ENCODE measurements at regions of chr2 and their contacts with region 1.

Region 1: GRCh38 chr2:88334418-88334817 is 118.1 kb downstream of the FOXI3 start:
- H3K4me3 ChIP-seq: no peak overlapping the region
- H3K27ac ChIP-seq: no peak overlapping the region
- H3K4me1 ChIP-seq: peaks cover 13% of the 10 kb centered on the region
- CTCF ChIP-seq: no peak

Region 2: DNA sequence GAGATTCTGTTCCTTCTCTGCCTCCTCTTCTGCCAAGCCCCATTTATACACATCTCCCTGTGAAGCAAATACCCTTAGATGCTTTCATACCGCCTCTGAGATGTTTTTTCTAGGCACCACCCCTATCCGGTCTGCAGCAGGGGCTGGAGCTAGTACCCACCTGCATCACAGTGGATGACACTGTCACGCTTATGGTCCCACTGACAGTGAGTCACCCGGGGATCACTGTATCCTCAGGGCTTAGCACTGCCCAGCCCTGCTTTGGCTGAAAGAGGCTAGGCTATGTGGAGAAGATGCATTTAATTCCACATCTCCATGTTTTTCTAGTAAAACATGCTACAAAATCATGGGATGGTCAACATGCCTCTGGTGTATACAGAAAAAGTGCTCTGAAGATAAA is 216.4 kb before region 1 on chr2:
- CTCF ChIA-PET with region 1: no interaction called
- POLR2A ChIA-PET with region 1: no interaction called
- H3K4me3 ChIP-seq: no peak overlapping the region
- H3K27ac ChIP-seq: no peak overlapping the region
- H3K4me1 ChIP-seq: no peaks in the 10 kb centered on the region
- CTCF ChIP-seq: no peak

Region 3: DNA sequence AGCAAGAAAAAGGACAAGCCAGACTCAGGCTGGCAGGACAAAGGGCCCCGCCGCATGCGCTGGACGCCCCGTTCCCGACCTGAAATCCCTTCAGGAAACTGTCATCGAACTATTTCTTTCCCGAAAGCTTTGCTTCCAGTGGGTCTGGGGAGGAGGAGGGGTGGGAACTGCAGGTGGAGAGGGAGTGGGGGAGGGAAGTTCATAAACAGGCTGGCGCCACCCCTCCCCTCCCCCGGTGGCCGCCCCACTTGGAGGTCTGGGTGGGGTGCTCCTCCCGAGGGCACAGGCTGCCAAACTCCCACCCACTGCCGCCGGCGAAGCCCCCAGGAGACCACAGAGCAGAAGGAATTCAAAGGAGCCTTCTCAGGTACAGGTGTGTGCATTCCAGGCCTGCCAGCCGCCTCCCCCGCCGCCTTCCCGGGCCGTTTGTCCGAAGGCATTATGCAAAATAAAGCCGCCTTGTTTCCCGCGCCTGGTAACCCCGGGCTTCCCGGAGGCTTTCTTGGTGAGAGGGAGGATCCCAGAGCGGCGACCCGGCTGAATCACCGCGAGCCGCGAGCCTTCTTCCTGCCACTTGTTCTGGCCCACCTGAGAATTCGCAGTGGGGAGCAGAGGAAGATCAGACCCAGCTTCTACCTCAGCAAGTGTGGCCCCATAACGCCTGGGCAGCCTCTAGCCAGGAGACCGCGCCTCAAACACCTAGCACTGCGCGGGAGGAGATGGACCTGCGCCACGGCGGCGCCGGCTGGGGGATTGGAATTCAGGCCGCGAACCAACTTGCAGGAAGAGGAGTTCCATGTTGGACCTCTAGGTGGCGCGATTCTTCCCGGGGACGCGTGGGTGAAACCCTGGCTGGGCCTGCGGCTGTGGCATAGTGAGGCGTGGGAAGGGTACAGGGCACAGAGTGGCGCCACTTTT is 16.2 kb after region 1 on chr2:
- CTCF ChIA-PET with region 1: interaction called, 15 read pairs
- POLR2A ChIA-PET with region 1: no interaction called
- H3K4me3 ChIP-seq: peak overlapping the region; percentile 32
- H3K27ac ChIP-seq: no peak overlapping the region
- H3K4me1 ChIP-seq: no peaks in the 10 kb centered on the region
- CTCF ChIP-seq: peak; percentile 92

Region 4: DNA sequence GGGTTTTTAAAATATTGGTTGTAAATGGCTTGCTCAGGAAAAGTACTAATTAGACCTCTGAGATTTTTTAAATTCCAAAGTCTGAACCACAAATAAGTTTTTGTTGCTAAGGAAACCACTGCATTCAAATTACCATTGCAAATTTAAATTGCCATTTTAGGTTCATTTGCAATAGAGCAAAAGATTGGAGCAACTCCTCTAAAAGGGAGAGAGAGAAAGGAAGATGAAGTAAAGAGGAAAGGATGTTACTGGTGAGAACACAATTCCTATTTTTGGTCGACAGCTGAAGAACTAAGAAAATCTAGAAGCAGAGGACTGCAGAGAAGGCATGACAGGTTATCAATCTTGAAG is 43.2 kb after region 1 on chr2:
- CTCF ChIA-PET with region 1: no interaction called
- POLR2A ChIA-PET with region 1: no interaction called
- H3K4me3 ChIP-seq: no peak overlapping the region
- H3K27ac ChIP-seq: no peak overlapping the region
- H3K4me1 ChIP-seq: no peaks in the 10 kb centered on the region
- CTCF ChIP-seq: no peak